H1 (cell line): ENCODE measurements at regions of chr22 and their contacts with region 1.

Region 1: DNA sequence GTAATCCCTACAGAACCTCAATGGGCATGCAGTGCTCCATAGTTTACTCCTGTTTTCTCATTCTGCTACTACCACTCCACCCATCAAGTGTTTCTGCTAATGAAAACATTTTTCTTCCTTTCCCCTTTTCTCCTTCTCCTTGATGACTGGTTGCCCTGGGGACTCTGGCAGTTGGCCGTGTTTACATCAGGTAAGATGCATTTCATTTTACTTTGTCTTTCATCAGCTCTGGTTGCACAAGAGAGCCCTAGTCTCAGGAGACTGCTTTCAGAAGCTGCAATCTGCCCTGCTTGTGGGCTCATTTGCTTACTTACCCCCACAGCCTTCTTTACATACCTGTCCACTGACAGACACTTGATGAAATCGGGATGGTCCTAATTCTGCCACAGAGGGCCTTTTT is 19.6 kb upstream of the LIMK2 start:
- DNase-seq: no peak
- H3K4me3 ChIP-seq: no peak overlapping the region
- H3K27ac ChIP-seq: no peak overlapping the region
- H3K4me1 ChIP-seq: no peaks in the 10 kb centered on the region
- H3K27me3 ChIP-seq: no peaks in the 10 kb centered on the region
- CTCF ChIP-seq: no peak
- EP300 ChIP-seq: no peak
- POLR2A ChIP-seq: no peak
- RAD21 ChIP-seq: no peak

Region 2: DNA sequence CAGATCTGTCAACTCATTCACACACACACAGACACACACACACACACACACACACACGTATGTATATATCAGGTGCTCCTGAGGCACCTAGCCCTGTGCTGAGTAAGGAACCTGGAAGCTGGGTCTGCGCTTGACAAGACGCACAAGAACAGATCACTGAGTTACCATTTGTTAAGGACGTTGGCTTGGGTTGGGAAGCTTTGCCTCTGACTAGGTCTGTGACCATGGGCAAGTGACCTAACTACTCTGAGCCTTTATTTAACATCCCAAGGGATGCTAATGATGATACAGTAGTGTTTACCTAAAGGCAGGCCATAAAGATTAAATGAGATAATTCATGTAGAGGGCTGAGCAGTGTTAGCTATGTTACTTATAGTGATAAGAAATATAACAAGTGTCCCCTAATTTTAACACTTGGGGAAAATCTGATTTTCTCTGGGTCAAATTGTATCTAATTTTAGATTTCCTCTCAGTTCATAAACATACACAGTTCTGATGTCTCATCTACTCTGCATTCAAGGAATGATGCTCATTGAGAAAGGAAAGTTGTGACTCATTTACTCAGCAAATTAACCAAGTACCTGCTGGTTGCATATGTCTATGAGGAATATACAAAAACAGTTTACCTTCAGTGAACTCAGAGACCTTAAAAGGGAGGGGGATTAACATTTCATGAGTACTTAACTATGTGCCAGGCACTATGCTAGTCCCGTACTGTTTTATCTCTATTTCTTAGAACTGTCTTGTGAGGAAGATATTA is 18.9 kb before region 1 on chr22:
- CTCF ChIA-PET with region 1: no interaction called
- POLR2A ChIA-PET with region 1: no interaction called
- DNase-seq: no peak
- H3K4me3 ChIP-seq: no peak overlapping the region
- H3K27ac ChIP-seq: no peak overlapping the region
- H3K4me1 ChIP-seq: no peaks in the 10 kb centered on the region
- H3K27me3 ChIP-seq: no peaks in the 10 kb centered on the region
- CTCF ChIP-seq: no peak
- EP300 ChIP-seq: no peak
- POLR2A ChIP-seq: no peak
- RAD21 ChIP-seq: no peak

Region 3: DNA sequence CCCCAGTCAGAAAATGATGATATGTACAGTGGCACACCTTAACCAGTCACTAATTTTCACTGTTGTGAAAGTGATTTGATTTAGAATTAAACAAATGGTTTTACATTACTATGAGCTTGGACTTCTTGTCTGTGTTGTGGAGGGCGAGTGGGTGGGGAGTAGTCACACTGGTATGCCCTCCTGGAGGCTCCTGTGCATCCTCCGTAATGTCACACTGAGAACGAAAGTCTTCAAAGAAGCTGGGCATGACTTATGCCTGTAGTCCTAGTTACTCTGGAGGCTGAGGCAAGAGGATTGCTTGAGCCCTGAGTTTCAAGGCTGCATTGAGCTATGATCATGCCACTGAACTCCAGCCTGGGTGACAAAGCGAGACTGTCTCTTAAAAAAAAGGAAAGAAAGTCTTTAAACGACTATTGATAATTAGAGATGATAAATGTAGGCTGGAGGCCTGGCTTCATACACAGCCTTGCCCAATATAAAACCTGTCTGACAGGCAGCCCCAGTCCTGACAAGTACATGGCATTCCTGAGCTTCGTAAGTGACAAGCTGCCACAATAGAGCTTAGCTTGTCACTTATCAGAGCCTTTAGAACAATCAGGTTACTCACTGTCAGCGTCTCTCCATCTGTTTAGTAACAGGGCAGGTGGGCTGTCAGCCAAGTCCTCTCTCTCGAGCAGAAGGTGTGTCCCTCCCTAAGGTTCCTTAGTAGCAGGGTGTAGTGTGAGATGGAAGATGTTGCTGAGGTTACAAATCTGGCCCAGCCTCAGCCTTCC is 14.6 kb after region 1 on chr22:
- CTCF ChIA-PET with region 1: interaction called, 16 read pairs
- POLR2A ChIA-PET with region 1: interaction called, 4 read pairs
- DNase-seq: no peak
- H3K4me3 ChIP-seq: no peak overlapping the region
- H3K27ac ChIP-seq: no peak overlapping the region
- H3K4me1 ChIP-seq: peaks cover 0 to 2% (median under 1%) of the 10 kb centered on the region in 4 experiments; a peak in 1 of 7 replicates
- H3K27me3 ChIP-seq: no peaks in the 10 kb centered on the region
- CTCF ChIP-seq: no peak
- EP300 ChIP-seq: no peak
- POLR2A ChIP-seq: no peak
- RAD21 ChIP-seq: no peak